ENCODE measurements at regions of chr20 and their contacts with region 1.

Region 1: DNA sequence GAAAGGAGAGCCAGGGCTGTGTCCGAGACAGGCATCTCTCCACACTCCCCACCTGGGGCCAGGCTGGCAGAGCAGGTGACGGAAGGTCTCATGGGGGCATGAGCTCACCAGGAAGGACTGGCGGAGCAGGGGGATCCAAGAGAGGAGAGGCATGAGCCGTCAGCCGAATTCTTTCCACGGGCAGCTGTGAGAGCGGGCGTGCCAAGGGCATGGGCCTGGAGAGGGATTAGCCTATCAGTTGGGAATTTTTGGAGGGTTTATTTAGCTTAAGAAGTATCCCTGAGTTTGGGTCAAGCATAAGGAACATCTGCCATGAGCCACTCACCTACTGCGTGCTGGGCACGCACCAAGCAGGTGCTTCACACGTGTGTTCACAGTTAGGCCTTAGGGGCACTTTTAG is 60.2 kb upstream of the ZNFX1 start:
- DNase-seq: no peak
- H3K4me3 ChIP-seq: no peak overlapping the region
- H3K27ac ChIP-seq: no peak overlapping the region
- H3K4me1 ChIP-seq: peaks cover 0 to 2% of the 10 kb centered on the region in 2 experiments; a peak in 1 of 4 replicates
- H3K27me3 ChIP-seq: no peaks in the 10 kb centered on the region
- CTCF ChIP-seq: no peak
- EP300 ChIP-seq: no peak
- RAD21 ChIP-seq: no peak

Region 2: GRCh38 chr20:48096858-48097548 is 1241.1 kb before region 1 on chr20:
- CTCF ChIA-PET with region 1: no interaction called
- POLR2A ChIA-PET with region 1: no interaction called
- DNase-seq: no peak
- H3K4me3 ChIP-seq: no peak overlapping the region
- H3K27ac ChIP-seq: no peak overlapping the region
- H3K4me1 ChIP-seq: no peaks in the 10 kb centered on the region; a peak in 1 of 4 replicates
- H3K27me3 ChIP-seq: no peaks in the 10 kb centered on the region
- CTCF ChIP-seq: no peak
- EP300 ChIP-seq: no peak
- RAD21 ChIP-seq: no peak

Region 3: DNA sequence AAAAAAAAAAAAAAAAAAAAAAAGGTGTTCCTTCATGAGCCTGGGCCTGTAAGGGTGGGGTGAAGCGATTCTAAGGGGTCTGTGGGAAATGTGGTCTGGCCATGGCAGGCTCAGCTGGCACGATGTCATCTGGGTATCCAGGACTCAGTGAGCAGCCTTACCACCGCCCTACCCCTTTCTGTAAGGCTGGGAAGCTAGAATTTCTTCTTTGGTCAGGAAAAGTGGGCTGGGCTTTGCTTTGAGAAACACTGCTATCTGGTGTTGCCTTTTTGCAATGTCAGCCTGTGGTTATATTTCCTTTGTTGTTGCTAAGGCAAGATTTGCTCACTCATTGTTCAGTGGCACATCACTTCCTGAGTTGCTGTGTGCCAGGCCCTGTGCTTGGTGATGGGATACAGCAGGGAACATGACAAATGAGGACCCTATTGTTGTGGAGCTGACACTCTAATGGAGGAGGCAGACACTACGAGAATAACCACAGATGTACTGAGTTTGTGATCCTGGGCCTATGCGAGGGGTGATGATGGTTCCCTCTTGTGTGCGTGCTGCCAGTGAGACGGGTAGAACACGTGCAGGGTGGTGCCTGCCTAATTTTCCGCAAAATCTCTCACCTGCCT is 14.3 kb before region 1 on chr20:
- CTCF ChIA-PET with region 1: interaction called, 95 read pairs
- POLR2A ChIA-PET with region 1: no interaction called
- DNase-seq: peak; percentile 41
- H3K4me3 ChIP-seq: no peak overlapping the region
- H3K27ac ChIP-seq: no peak overlapping the region; a peak in 1 of 4 replicates
- H3K4me1 ChIP-seq: peaks cover 0 to 8% of the 10 kb centered on the region in 2 experiments; a peak in 1 of 4 replicates
- H3K27me3 ChIP-seq: peaks cover 14% of the 10 kb centered on the region
- CTCF ChIP-seq: peak; percentile 56
- EP300 ChIP-seq: no peak
- RAD21 ChIP-seq: peak; percentile 72

Region 4: GRCh38 chr20:49367113-49367512 is 29.1 kb after region 1 on chr20:
- CTCF ChIA-PET with region 1: interaction called, 12 read pairs
- POLR2A ChIA-PET with region 1: no interaction called
- DNase-seq: peak; percentile 47
- H3K4me3 ChIP-seq: no peak overlapping the region
- H3K27ac ChIP-seq: peak overlapping the region in 1 of 2 experiments; percentile 72; a peak in 2 of 4 replicates
- H3K4me1 ChIP-seq: peaks cover 0 to 24% of the 10 kb centered on the region in 2 experiments; a peak in 2 of 4 replicates
- H3K27me3 ChIP-seq: peaks cover 4% of the 10 kb centered on the region; the same call in 1 of the 2 replicates
- CTCF ChIP-seq: no peak
- EP300 ChIP-seq: 0 out of 4 replicates have a peak, but pooled peaks of 1 of the 2 experiments have one; percentile 4
- RAD21 ChIP-seq: no peak

Region 5: DNA sequence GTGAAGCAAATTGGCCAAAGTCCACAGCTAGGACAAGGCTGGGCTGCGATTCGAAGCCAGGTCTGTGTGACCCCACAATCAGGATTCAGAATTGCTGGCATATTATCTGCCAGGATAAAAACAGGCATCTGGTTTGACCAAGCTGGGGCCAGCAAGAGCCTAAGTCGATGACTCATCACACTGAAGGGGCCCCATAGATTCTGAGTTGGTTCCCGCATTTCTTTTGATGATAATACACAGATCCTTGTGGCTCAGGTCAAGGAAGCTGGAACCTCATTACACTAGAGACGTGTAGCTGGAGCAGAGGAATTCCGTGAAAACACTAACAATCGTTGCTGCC is 137.9 kb after region 1 on chr20:
- CTCF ChIA-PET with region 1: interaction called, 141 read pairs
- POLR2A ChIA-PET with region 1: no interaction called
- DNase-seq: no peak
- H3K4me3 ChIP-seq: no peak overlapping the region
- H3K27ac ChIP-seq: no peak overlapping the region
- H3K4me1 ChIP-seq: peaks cover 0 to 5% of the 10 kb centered on the region in 2 experiments; a peak in 1 of 4 replicates
- H3K27me3 ChIP-seq: no peaks in the 10 kb centered on the region
- CTCF ChIP-seq: no peak
- EP300 ChIP-seq: no peak
- RAD21 ChIP-seq: no peak

Region 6: DNA sequence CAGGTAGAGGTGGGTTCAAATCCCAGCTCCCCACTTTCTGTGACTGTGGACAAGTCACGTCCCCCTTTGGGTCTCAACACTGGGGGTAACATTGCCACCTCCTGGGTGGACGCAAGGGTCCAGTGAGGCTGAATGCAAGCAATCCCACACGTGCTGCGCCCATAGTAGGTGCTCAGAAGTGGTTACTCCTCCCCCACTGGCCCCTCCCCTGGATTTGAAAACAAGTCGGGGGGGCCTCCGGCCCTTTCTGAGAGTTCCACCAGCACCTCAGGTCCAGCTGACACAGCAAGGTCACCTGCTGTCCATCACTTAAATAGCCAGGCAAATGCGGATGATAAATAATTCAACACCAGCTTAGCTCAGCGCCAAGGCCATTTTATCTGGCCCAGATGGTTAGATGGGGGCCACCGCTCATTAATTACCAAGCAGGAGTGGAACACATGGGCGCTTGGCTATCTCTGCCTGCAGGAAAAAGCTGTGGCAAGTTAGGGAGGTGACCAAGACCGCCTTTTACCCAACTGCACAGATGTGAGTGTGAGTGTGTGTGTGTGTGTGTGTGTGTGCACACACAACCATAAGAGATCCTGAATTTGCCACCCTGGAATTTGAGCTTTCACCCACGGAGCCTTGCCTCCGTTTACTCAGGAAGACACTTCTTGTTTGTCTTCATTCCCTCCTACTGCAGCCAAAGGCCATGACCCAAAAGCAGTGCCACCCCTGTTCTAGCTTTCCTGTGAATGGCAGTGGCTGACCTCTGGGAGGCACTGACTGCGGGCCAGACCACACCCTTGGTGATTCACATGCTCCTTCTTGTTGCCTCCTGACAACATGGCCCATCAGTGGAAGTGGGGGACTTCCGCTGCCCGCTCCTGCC is 179.1 kb after region 1 on chr20:
- CTCF ChIA-PET with region 1: interaction called, 317 read pairs
- POLR2A ChIA-PET with region 1: no interaction called
- DNase-seq: no peak
- H3K4me3 ChIP-seq: no peak overlapping the region
- H3K27ac ChIP-seq: no peak overlapping the region
- H3K4me1 ChIP-seq: no peaks in the 10 kb centered on the region
- H3K27me3 ChIP-seq: no peaks in the 10 kb centered on the region
- CTCF ChIP-seq: no peak
- EP300 ChIP-seq: no peak
- RAD21 ChIP-seq: no peak

Measured in SK-N-SH (cell line).